Gastrocnemius medialis (tissue), 4 donors: ENCODE measurements at regions of chr17 and their contacts with region 1.

Region 1: GRCh38 chr17:1365445-1366039 is 34.5 kb downstream of the YWHAE start:
- DNase-seq: peak; percentile 60 to 66
- ATAC-seq: peak; percentile 76 to 80
- H3K4me3 ChIP-seq: peak overlapping the region in 1 of 4 donors; percentile 15
- H3K27ac ChIP-seq: peak overlapping the region; percentile 74 to 81 (median 76)
- H3K4me1 ChIP-seq: peaks cover 83 to 86% of the 10 kb centered on the region in 2 donors
- H3K27me3 ChIP-seq: no peaks in the 10 kb centered on the region
- CTCF ChIP-seq: peak; percentile 77 to 91 (median 88)
- POLR2A ChIP-seq: no peak

Region 2: DNA sequence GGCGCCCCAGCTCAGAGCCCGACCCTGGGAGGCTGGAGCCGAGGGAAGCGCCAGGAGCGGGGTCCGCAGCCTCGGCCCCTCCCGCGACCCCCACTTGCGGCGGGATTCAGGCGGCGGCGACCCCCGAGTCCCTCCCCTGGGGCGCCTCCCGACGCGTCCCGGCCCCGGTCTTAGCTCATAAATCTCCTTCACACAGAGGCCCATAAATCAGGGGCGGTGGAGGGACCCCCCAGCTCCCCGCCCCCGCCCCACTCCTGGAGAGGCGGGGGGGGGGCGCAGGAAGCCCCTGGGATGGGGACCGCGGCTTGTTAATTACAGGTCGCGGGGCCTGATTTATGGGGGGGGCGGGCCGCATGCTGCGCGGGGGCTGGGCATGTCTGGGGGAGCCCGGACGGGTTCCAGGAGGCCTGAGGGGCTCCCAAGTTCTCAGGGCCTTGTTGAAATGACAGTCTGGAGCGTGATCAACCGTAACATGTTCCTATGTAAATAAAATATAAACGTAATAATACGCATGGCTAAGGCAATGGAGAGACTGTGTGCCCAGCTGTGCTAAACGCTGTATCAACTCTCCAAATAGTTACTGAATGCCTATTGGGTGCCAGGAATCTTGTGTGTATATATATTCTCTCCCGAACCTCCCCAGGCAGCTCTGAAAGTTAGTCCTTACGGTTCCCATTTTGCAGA is 105.3 kb before region 1 on chr17:
- in situ Hi-C with region 1: no loop called
- intact Hi-C with region 1: no loop called
- DNase-seq: no peak
- ATAC-seq: no peak
- H3K4me3 ChIP-seq: peak overlapping the region; percentile 50 to 76 (median 54)
- H3K27ac ChIP-seq: peak overlapping the region in 2 of 4 donors; percentile 56 to 66
- H3K4me1 ChIP-seq: peaks cover 0 to 11% of the 10 kb centered on the region in 2 donors
- H3K27me3 ChIP-seq: peaks cover 0 to 27% (median 14%) of the 10 kb centered on the region in 3 donors
- CTCF ChIP-seq: no peak
- POLR2A ChIP-seq: no peak

Region 3: DNA sequence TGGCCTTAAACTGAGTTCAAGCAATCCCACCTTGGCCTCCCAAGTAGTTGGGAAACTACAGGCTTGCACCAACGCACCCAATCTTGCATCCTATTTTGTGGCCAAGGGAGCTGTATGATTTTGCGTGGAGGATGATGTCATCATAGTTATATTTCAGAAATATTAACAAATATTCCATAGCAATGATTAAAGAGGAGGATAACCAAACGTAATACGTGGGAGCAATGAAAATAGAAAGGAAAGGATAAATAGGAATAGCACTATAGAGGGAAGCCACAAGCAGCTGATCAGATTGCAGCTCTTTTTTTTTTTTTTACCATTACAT is 36.7 kb after region 1 on chr17:
- in situ Hi-C with region 1: no loop called
- intact Hi-C with region 1: no loop called
- DNase-seq: no peak
- ATAC-seq: no peak
- H3K4me3 ChIP-seq: no peak overlapping the region
- H3K27ac ChIP-seq: no peak overlapping the region
- H3K4me1 ChIP-seq: peaks cover 19 to 21% of the 10 kb centered on the region in 2 donors
- H3K27me3 ChIP-seq: no peaks in the 10 kb centered on the region
- CTCF ChIP-seq: no peak
- POLR2A ChIP-seq: no peak

Region 4: DNA sequence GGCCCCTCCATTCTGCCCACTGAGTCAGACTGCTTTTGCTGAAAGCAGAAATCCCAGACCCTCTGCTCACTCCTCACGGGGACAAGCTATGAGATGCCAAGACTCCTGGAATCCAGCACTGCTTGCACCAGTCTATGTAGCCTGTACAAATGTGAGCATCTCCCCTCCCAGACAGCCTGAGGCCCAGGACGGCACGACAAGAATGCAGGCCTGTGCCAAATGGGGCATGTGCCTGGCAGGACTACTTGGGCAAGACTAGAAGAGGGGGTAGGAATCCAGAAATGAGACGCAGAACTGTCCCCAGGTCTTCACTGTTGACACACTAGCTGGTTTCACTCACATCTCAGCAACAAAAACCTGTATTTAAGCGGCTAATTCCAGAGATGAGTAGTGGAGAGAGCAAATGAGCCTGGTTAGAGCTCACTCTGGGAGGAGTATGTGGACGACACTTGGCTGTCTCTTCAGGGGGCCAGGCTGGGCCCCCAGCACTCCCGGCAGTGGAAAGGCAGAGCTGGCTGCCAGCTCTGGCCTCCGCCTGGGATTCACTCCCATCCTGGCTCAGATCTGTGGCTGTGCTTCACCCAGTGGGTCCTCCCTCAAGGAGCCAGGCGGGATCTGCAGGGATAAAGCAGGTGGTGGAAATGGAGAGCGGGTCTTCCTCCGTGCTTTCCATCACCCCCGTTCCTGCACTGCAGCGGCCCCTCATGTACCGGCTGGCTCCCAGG is 129.9 kb after region 1 on chr17:
- in situ Hi-C with region 1: loop called in 1 of 4 experiments (anchors 25 kb)
- intact Hi-C with region 1: loop called (anchors 5 kb)
- DNase-seq: peak; percentile 64 to 89
- ATAC-seq: peak; percentile 55 to 76
- H3K4me3 ChIP-seq: no peak overlapping the region
- H3K27ac ChIP-seq: peak overlapping the region; percentile 65 to 91 (median 80)
- H3K4me1 ChIP-seq: peaks cover 42 to 51% of the 10 kb centered on the region in 2 donors
- H3K27me3 ChIP-seq: no peaks in the 10 kb centered on the region
- CTCF ChIP-seq: no peak
- POLR2A ChIP-seq: no peak

Region 5: GRCh38 chr17:1829592-1830257 is 464.2 kb after region 1 on chr17 and contains the starts of genes RPA1 and SMYD4:
- in situ Hi-C with region 1: no loop called
- intact Hi-C with region 1: no loop called
- DNase-seq: peak; percentile 81 to 88
- ATAC-seq: peak; percentile 87 to 90
- H3K4me3 ChIP-seq: peak within 1 kb of the TSS; percentile 82 to 93 (median 92)
- H3K27ac ChIP-seq: peak within 1 kb of the TSS; percentile 95 to 98 (median 96)
- H3K4me1 ChIP-seq: peaks cover 13 to 15% of the 10 kb centered on the region in 2 donors
- H3K27me3 ChIP-seq: no peaks in the 10 kb centered on the region
- CTCF ChIP-seq: peak in 1 of 5 experiments; percentile 48
- POLR2A ChIP-seq: peak; percentile 99 to 100
- total RNA-seq, gene RPA1: 26.5 to 46.8 (median 34.9) TPM
- total RNA-seq, gene SMYD4: 15.1 to 18.1 (median 16.7) TPM